Activated naive CD8-positive, alpha-beta T cell treated with anti-CD3 and anti-CD28 coated beads, Interleukin-2, amount 10 ng/mL, durations not matched to agents 7 days and 5 days (primary cell): ENCODE measurements at regions of chr17 and their contacts with region 1.

Region 1: GRCh38 chr17:75515496-75516254 is at the start of gene CASKIN2:
- DNase-seq: peak; percentile 85
- ATAC-seq: peak; percentile 47
- H3K4me3 Mint-ChIP-seq: peak within 1 kb of the TSS; percentile 70
- H3K27ac Mint-ChIP-seq: peak within 1 kb of the TSS; percentile 16
- H3K4me1 Mint-ChIP-seq: peaks cover 24% of the 10 kb centered on the region
- H3K27me3 Mint-ChIP-seq: peaks cover 7% of the 10 kb centered on the region
- total RNA-seq, gene CASKIN2: 0.72 to 2.3 TPM

Region 2: DNA sequence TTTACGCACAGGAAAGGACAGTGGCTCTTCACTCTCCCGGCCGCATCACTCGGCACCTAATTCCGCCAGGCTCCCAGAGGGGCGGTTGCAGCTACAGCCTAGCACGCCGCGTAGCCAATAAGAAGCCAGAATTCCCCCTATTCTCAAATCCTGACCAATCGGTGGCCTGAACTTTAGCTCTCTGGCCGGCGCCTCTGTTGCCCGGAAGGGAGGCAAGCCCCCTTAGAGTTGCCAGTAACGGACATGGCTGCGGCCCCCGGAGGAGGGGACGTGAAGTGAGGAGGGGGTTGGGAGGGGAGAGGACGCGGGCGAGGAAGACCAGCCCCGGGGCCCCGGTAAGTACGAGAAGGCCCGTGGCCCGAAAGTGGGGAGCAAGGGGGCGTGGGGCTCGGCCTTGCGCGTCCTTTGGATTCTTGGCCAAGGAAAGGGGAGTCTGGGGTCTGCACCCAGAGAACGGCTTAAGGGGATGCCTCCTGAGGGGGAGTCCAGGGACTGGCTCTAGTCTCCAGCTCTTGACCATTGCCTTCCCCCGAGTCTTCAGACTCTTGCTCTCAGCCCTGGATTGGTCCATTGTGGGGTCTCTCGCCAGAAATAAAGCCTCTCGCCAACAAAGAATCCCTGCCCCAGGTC is 59.1 kb before region 1 on chr17 and contains the start of gene TMEM94:
- POLR2A ChIA-PET with region 1: interaction called, 13 read pairs
- DNase-seq: peak; percentile 82
- ATAC-seq: peak; percentile 98
- H3K4me3 Mint-ChIP-seq: peak within 1 kb of the TSS; percentile 92
- H3K27ac Mint-ChIP-seq: peak within 1 kb of the TSS; percentile 85
- H3K4me1 Mint-ChIP-seq: peaks cover 28% of the 10 kb centered on the region
- H3K27me3 Mint-ChIP-seq: no peaks in the 10 kb centered on the region
- total RNA-seq, gene TMEM94: 112 to 115 TPM

Region 3: GRCh38 chr17:75487351-75488070 is 28.2 kb before region 1 on chr17:
- POLR2A ChIA-PET with region 1: interaction called, 10 read pairs
- DNase-seq: peak; percentile 72
- ATAC-seq: peak; percentile 95
- H3K4me3 Mint-ChIP-seq: peak overlapping the region; percentile 77
- H3K27ac Mint-ChIP-seq: peak overlapping the region; percentile 98
- H3K4me1 Mint-ChIP-seq: peaks cover 23% of the 10 kb centered on the region
- H3K27me3 Mint-ChIP-seq: no peaks in the 10 kb centered on the region

Region 4: GRCh38 chr17:75589012-75589918 is 73.6 kb after region 1 on chr17:
- POLR2A ChIA-PET with region 1: interaction called, 13 read pairs
- DNase-seq: peak; percentile 99
- ATAC-seq: peak; percentile 77
- H3K4me3 Mint-ChIP-seq: peak overlapping the region; percentile 81
- H3K27ac Mint-ChIP-seq: peak overlapping the region; percentile 72
- H3K4me1 Mint-ChIP-seq: peaks cover 5% of the 10 kb centered on the region
- H3K27me3 Mint-ChIP-seq: peaks cover 25% of the 10 kb centered on the region